B cell (primary cell): ENCODE measurements at regions of chr1 and their contacts with region 1.

Region 1: DNA sequence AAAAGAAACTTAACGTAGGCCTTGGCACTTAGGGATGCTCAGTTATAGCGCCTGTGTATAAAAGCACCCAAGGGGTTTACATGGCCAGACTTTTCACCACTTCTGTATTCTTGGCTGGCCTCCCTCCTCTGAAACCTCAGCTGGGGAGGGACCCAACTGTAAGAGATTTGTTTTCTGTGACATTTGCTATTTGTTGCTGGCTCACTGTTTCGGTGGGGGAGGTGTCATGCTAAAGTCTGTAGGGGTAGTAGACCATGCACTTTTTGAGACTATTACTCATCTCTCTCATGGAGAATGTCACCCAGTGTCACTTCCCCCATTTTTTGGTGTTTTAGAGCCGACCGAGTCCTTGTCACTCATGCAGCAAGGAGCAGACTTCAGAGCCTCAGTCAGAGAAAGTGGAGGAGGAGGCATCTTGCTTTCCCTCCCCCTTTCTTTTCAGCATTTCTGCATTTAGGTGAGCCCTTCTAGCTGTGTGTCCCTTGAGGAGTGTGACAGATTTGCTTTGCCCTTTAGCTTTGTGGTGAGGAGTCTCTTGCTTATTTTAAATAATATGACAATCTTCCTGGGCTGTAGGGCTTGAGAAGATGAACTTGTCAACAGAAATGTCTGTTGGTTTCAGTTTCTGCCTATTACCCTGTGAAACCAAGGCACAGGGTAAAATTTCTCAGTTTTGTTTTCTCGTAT is 160.1 kb downstream of the FASLG start:
- DNase-seq: peak; percentile 94
- ATAC-seq: peak; percentile 77
- H3K4me3 ChIP-seq: peak overlapping the region in 4 of 5 experiments; percentile 4 to 37 (median 17)
- H3K4me3 Mint-ChIP-seq: peak overlapping the region; percentile 77
- H3K27ac ChIP-seq: peak overlapping the region; percentile 84 to 93
- H3K27ac Mint-ChIP-seq: peak overlapping the region; percentile 93
- H3K4me1 ChIP-seq: peaks cover 26 to 35% of the 10 kb centered on the region in 2 donors
- H3K4me1 Mint-ChIP-seq: peaks cover 41% of the 10 kb centered on the region
- H3K27me3 ChIP-seq: no peaks in the 10 kb centered on the region
- H3K27me3 Mint-ChIP-seq: no peaks in the 10 kb centered on the region
- CTCF ChIP-seq: no peak

Region 2: GRCh38 chr1:171741872-171742576 is 1077.0 kb before region 1 on chr1 and contains the start of gene VAMP4:
- CTCF ChIA-PET with region 1: no interaction called
- POLR2A ChIA-PET with region 1: no interaction called
- intact Hi-C with region 1: loop called (anchors 2 kb)
- DNase-seq: peak; percentile 92
- ATAC-seq: peak; percentile 90
- H3K4me3 ChIP-seq: peak within 1 kb of the TSS; percentile 69 to 95 (median 93)
- H3K4me3 Mint-ChIP-seq: peak within 1 kb of the TSS; percentile 100
- H3K27ac ChIP-seq: peak within 1 kb of the TSS; percentile 91
- H3K27ac Mint-ChIP-seq: peak within 1 kb of the TSS; percentile 100
- H3K4me1 ChIP-seq: peaks cover 20 to 23% of the 10 kb centered on the region in 2 donors
- H3K4me1 Mint-ChIP-seq: peaks cover 40% of the 10 kb centered on the region
- H3K27me3 ChIP-seq: no peaks in the 10 kb centered on the region
- H3K27me3 Mint-ChIP-seq: no peaks in the 10 kb centered on the region
- CTCF ChIP-seq: no peak
- total RNA-seq, gene VAMP4: 17.5 and 21.8 TPM in 2 replicates

Region 3: GRCh38 chr1:172778456-172779455 is 40.2 kb before region 1 on chr1:
- CTCF ChIA-PET with region 1: interaction called, 36 read pairs
- POLR2A ChIA-PET with region 1: interaction called, 3 read pairs
- intact Hi-C with region 1: loop called (anchors 1 kb)
- DNase-seq: peak; percentile 33
- ATAC-seq: peak; percentile 73
- H3K4me3 ChIP-seq: no peak overlapping the region
- H3K4me3 Mint-ChIP-seq: peak overlapping the region; percentile 28
- H3K27ac ChIP-seq: no peak overlapping the region
- H3K27ac Mint-ChIP-seq: no peak overlapping the region
- H3K4me1 ChIP-seq: peaks cover 13 to 14% of the 10 kb centered on the region in 2 donors
- H3K4me1 Mint-ChIP-seq: peaks cover 26% of the 10 kb centered on the region
- H3K27me3 ChIP-seq: no peaks in the 10 kb centered on the region
- H3K27me3 Mint-ChIP-seq: no peaks in the 10 kb centered on the region
- CTCF ChIP-seq: peak; percentile 39

Region 4: GRCh38 chr1:172789866-172790644 is 28.9 kb before region 1 on chr1:
- CTCF ChIA-PET with region 1: no interaction called
- POLR2A ChIA-PET with region 1: no interaction called
- intact Hi-C with region 1: no loop called
- DNase-seq: no peak
- ATAC-seq: no peak
- H3K4me3 ChIP-seq: no peak overlapping the region
- H3K4me3 Mint-ChIP-seq: no peak overlapping the region
- H3K27ac ChIP-seq: no peak overlapping the region
- H3K27ac Mint-ChIP-seq: no peak overlapping the region
- H3K4me1 ChIP-seq: no peaks in the 10 kb centered on the region
- H3K4me1 Mint-ChIP-seq: no peaks in the 10 kb centered on the region
- H3K27me3 ChIP-seq: no peaks in the 10 kb centered on the region
- H3K27me3 Mint-ChIP-seq: no peaks in the 10 kb centered on the region
- CTCF ChIP-seq: no peak

Region 5: DNA sequence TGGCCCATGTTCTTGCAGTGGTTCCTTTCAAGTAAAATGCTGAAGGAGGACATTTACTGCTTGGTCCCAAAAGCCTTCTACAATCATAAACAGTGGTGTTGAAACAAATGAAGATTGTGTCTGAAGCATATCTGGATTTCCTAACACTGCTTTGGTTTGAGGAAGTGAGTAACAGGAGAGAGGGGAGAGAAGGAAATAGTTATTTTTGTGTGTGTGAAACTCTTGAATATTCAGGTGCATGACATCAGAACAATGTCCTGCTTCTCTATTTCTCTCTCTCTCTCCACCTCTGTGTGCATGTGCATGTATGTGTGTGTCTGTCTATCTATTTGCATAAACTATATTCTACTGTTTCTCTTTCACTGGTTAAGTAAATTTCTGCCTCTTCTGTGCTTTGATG is 293.1 kb after region 1 on chr1:
- CTCF ChIA-PET with region 1: no interaction called
- POLR2A ChIA-PET with region 1: no interaction called
- intact Hi-C with region 1: loop called (anchors 5 kb)
- DNase-seq: peak; percentile 73
- ATAC-seq: peak; percentile 94
- H3K4me3 ChIP-seq: no peak overlapping the region
- H3K4me3 Mint-ChIP-seq: peak overlapping the region; percentile 12
- H3K27ac ChIP-seq: peak overlapping the region; percentile 10 to 36
- H3K27ac Mint-ChIP-seq: peak overlapping the region; percentile 28
- H3K4me1 ChIP-seq: peaks cover 16 to 20% of the 10 kb centered on the region in 2 donors
- H3K4me1 Mint-ChIP-seq: peaks cover 36% of the 10 kb centered on the region
- H3K27me3 ChIP-seq: no peaks in the 10 kb centered on the region
- H3K27me3 Mint-ChIP-seq: no peaks in the 10 kb centered on the region
- CTCF ChIP-seq: no peak

Region 6: GRCh38 chr1:173476664-173477285 is 657.8 kb after region 1 on chr1:
- CTCF ChIA-PET with region 1: no interaction called
- POLR2A ChIA-PET with region 1: no interaction called
- intact Hi-C with region 1: loop called (anchors 1 kb)
- DNase-seq: peak; percentile 92
- ATAC-seq: peak; percentile 92
- H3K4me3 ChIP-seq: peak overlapping the region; percentile 48 to 96 (median 87)
- H3K4me3 Mint-ChIP-seq: peak overlapping the region; percentile 99
- H3K27ac ChIP-seq: peak overlapping the region; percentile 42 to 82
- H3K27ac Mint-ChIP-seq: peak overlapping the region; percentile 99
- H3K4me1 ChIP-seq: peaks cover 22 to 23% of the 10 kb centered on the region in 2 donors
- H3K4me1 Mint-ChIP-seq: peaks cover 42% of the 10 kb centered on the region
- H3K27me3 ChIP-seq: no peaks in the 10 kb centered on the region
- H3K27me3 Mint-ChIP-seq: no peaks in the 10 kb centered on the region
- CTCF ChIP-seq: no peak

Region 7: GRCh38 chr1:174022080-174022975 is 1203.3 kb after region 1 on chr1 and contains the start of gene RC3H1:
- CTCF ChIA-PET with region 1: no interaction called
- POLR2A ChIA-PET with region 1: no interaction called
- intact Hi-C with region 1: loop called (anchors 2 kb)
- DNase-seq: peak; percentile 93
- ATAC-seq: peak; percentile 95
- H3K4me3 ChIP-seq: peak within 1 kb of the TSS; percentile 73 to 94 (median 91)
- H3K4me3 Mint-ChIP-seq: peak within 1 kb of the TSS; percentile 95
- H3K27ac ChIP-seq: peak within 1 kb of the TSS; percentile 76 to 93
- H3K27ac Mint-ChIP-seq: peak within 1 kb of the TSS; percentile 96
- H3K4me1 ChIP-seq: peaks cover 30 to 36% of the 10 kb centered on the region in 2 donors
- H3K4me1 Mint-ChIP-seq: peaks cover 41% of the 10 kb centered on the region
- H3K27me3 ChIP-seq: no peaks in the 10 kb centered on the region
- H3K27me3 Mint-ChIP-seq: no peaks in the 10 kb centered on the region
- CTCF ChIP-seq: no peak
- total RNA-seq, gene RC3H1: 84.4 and 84.5 TPM in 2 replicates